ENCODE measurements at regions of chr4 and their contacts with region 1.

Region 1: GRCh38 chr4:79429113-79429903 is 21.3 kb upstream of the GK2 start:
- DNase-seq: no peak
- H3K4me3 Mint-ChIP-seq: no peak overlapping the region
- H3K27ac Mint-ChIP-seq: no peak overlapping the region
- H3K4me1 Mint-ChIP-seq: no peaks in the 10 kb centered on the region
- H3K27me3 Mint-ChIP-seq: no peaks in the 10 kb centered on the region
- CTCF ChIP-seq: no peak

Region 2: DNA sequence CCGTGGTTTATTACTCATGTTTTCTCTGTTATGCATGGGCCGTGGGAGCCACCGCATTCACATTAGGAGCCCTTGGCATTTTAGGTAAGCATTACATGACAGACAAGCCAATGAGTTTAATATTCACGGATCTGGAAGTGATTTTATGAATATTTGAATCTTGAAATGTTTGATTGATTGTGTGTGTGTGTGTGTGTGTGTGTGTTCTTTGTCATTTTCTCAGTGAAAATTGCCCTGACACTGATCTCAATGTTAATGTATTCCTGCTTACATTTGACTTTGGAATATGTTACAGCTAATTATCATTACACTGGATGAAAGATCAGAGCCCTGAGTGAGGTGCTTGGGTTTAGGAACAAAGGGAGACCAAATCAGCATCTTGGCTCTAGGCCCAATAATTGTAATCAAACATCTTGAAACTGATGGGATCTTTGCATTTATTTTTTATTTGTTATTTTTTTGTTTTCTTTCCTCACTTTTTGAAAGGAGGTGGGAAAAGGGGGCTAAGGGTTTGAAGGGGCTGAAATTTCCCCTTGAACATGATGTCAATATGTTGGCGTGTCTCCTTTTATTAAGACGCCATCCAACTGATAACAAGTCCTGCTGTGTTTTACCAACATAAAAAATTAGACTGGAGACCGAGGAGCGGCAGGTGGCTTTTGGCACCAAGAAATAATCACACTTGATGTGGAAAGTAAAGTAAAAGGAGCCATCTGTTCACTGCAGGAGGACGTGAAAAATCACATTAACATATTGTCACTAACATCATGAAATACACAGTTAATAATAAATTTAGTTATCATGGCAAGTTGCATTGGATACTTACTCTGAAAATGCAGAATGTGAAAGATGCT is 16.0 kb before region 1 on chr4:
- CTCF ChIA-PET with region 1: no interaction called
- intact Hi-C with region 1: loop called (anchors 1 kb)
- DNase-seq: no peak
- H3K4me3 Mint-ChIP-seq: no peak overlapping the region
- H3K27ac Mint-ChIP-seq: no peak overlapping the region
- H3K4me1 Mint-ChIP-seq: no peaks in the 10 kb centered on the region
- H3K27me3 Mint-ChIP-seq: no peaks in the 10 kb centered on the region
- CTCF ChIP-seq: no peak